CD4-positive, alpha-beta T cell (primary cell): ENCODE measurements at regions of chr14 and their contacts with region 1.

Region 1: GRCh38 chr14:58808828-58809227 is 171.1 kb downstream of the DACT1 start:
- DNase-seq: no peak
- ATAC-seq: no peak
- H3K4me3 ChIP-seq: no peak overlapping the region
- H3K4me3 Mint-ChIP-seq: no peak overlapping the region
- H3K27ac ChIP-seq: no peak overlapping the region
- H3K27ac Mint-ChIP-seq: no peak overlapping the region
- H3K4me1 ChIP-seq: no peaks in the 10 kb centered on the region
- H3K4me1 Mint-ChIP-seq: no peaks in the 10 kb centered on the region
- H3K27me3 ChIP-seq: no peaks in the 10 kb centered on the region
- H3K27me3 Mint-ChIP-seq: peaks cover 6% of the 10 kb centered on the region
- CTCF ChIP-seq: no peak

Region 2: GRCh38 chr14:58839233-58839632 is 30.4 kb after region 1 on chr14:
- CTCF ChIA-PET with region 1: no interaction called
- POLR2A ChIA-PET with region 1: no interaction called
- intact Hi-C with region 1: loop called in 1 of 2 experiments (anchors 1 kb)
- DNase-seq: no peak
- ATAC-seq: no peak
- H3K4me3 ChIP-seq: no peak overlapping the region
- H3K4me3 Mint-ChIP-seq: no peak overlapping the region
- H3K27ac ChIP-seq: no peak overlapping the region
- H3K27ac Mint-ChIP-seq: no peak overlapping the region
- H3K4me1 ChIP-seq: no peaks in the 10 kb centered on the region
- H3K4me1 Mint-ChIP-seq: no peaks in the 10 kb centered on the region
- H3K27me3 ChIP-seq: no peaks in the 10 kb centered on the region
- H3K27me3 Mint-ChIP-seq: no peaks in the 10 kb centered on the region
- CTCF ChIP-seq: no peak